HEK293 (cell line): ENCODE measurements at regions of chr19 and their contacts with region 1.

Region 1: GRCh38 chr19:38374429-38375176 is at the start of gene PSMD8:
- H3K4me3 ChIP-seq: peak within 1 kb of the TSS; percentile 70
- H3K27ac ChIP-seq: peak within 1 kb of the TSS; percentile 93
- H3K4me1 ChIP-seq: peaks cover 20% of the 10 kb centered on the region
- CTCF ChIP-seq: peak; percentile 97

Region 2: DNA sequence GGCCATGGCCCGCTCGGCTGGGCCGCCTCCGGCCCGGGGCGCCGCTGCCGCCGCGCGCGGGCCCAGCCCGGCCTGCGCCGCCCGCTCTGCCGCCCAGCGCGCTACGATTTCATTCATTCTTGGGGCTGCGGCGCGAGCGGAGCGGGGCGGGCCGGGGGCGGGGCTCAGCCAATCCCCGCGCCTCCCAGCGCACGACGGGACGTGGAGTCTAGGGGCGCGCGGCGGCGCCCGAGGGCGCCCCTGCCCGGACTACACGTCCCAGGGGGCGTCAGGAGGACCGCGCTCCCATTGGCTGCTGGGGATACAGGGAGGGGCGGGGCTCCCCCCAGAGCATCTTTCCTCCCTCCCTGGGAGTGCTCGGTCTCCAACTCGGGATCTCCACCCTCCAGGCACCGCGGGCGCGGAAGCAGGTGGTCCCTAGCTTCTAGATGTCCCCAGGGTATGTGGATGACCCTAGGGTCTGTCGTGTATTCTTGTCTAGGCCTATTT is 145.0 kb before region 1 on chr19:
- CTCF ChIA-PET with region 1: interaction called, 19 read pairs
- POLR2A ChIA-PET with region 1: interaction called, 8 read pairs
- H3K4me3 ChIP-seq: peak overlapping the region; percentile 40
- H3K27ac ChIP-seq: no peak overlapping the region
- H3K4me1 ChIP-seq: peaks cover 10% of the 10 kb centered on the region
- CTCF ChIP-seq: peak; percentile 51

Region 3: GRCh38 chr19:38263689-38264485 is 110.7 kb before region 1 on chr19:
- CTCF ChIA-PET with region 1: interaction called, 3 read pairs
- POLR2A ChIA-PET with region 1: interaction called, 19 read pairs
- H3K4me3 ChIP-seq: peak overlapping the region; percentile 52
- H3K27ac ChIP-seq: peak overlapping the region; percentile 90
- H3K4me1 ChIP-seq: peaks cover 44% of the 10 kb centered on the region
- CTCF ChIP-seq: no peak

Region 4: GRCh38 chr19:38319421-38320258 is 55.0 kb before region 1 on chr19 and contains the start of gene KCNK6:
- CTCF ChIA-PET with region 1: no interaction called
- POLR2A ChIA-PET with region 1: interaction called, 13 read pairs
- H3K4me3 ChIP-seq: peak within 1 kb of the TSS; percentile 27
- H3K27ac ChIP-seq: peak within 1 kb of the TSS; percentile 51; the same call in 1 of the 2 replicates
- H3K4me1 ChIP-seq: peaks cover 12% of the 10 kb centered on the region
- CTCF ChIP-seq: peak; percentile 6; the same call in 1 of the 2 replicates

Region 5: GRCh38 chr19:38387550-38388348 is 13.1 kb after region 1 on chr19 and contains the start of gene GGN:
- CTCF ChIA-PET with region 1: interaction called, 8 read pairs
- POLR2A ChIA-PET with region 1: interaction called, 223 read pairs
- H3K4me3 ChIP-seq: peak within 1 kb of the TSS; percentile 56
- H3K27ac ChIP-seq: peak within 1 kb of the TSS; percentile 63
- H3K4me1 ChIP-seq: peaks cover 19% of the 10 kb centered on the region
- CTCF ChIP-seq: no peak

Region 6: GRCh38 chr19:38455031-38455430 is 80.4 kb after region 1 on chr19:
- CTCF ChIA-PET with region 1: no interaction called
- POLR2A ChIA-PET with region 1: no interaction called
- H3K4me3 ChIP-seq: no peak overlapping the region
- H3K27ac ChIP-seq: no peak overlapping the region
- H3K4me1 ChIP-seq: no peaks in the 10 kb centered on the region
- CTCF ChIP-seq: no peak